GM12878 (cell line): ENCODE measurements at regions of chr9 and their contacts with region 1.

Region 1: GRCh38 chr9:69056191-69056815 is 20.8 kb downstream of the FXN start:
- DNase-seq: no peak
- ATAC-seq: no peak
- H3K4me3 ChIP-seq: no peak overlapping the region
- H3K27ac ChIP-seq: no peak overlapping the region
- H3K4me1 ChIP-seq: no peaks in the 10 kb centered on the region
- H3K27me3 ChIP-seq: no peaks in the 10 kb centered on the region
- CTCF ChIP-seq: no peak
- EP300 ChIP-seq: no peak
- POLR2A ChIP-seq: no peak
- RAD21 ChIP-seq: no peak

Region 2: GRCh38 chr9:69035438-69036308 is 20.6 kb before region 1 on chr9 and contains the start of gene FXN:
- CTCF ChIA-PET with region 1: interaction called, 16 read pairs
- POLR2A ChIA-PET with region 1: interaction called, 3 read pairs
- RAD21 ChIA-PET with region 1: interaction called, 4 read pairs
- SMC1A ChIA-PET with region 1: interaction called, 5 read pairs
- in situ Hi-C with region 1: no loop called
- intact Hi-C with region 1: no loop called
- DNase-seq: peak; percentile 38
- ATAC-seq: peak; percentile 98
- H3K4me3 ChIP-seq: peak within 1 kb of the TSS; percentile 96
- H3K27ac ChIP-seq: peak within 1 kb of the TSS; percentile 72
- H3K4me1 ChIP-seq: peaks cover 6% of the 10 kb centered on the region
- H3K27me3 ChIP-seq: no peaks in the 10 kb centered on the region
- CTCF ChIP-seq: peak; percentile 96 to 98 (median 98)
- EP300 ChIP-seq: no peak
- POLR2A ChIP-seq: peak; percentile 84
- RAD21 ChIP-seq: peak; percentile 67
- polyA plus RNA-seq, gene FXN: 21.0 to 22.3 TPM

Region 3: GRCh38 chr9:69066955-69067354 is 10.7 kb after region 1 on chr9:
- CTCF ChIA-PET with region 1: interaction called, 14 read pairs
- POLR2A ChIA-PET with region 1: no interaction called
- RAD21 ChIA-PET with region 1: no interaction called
- SMC1A ChIA-PET with region 1: interaction called, 3 read pairs
- in situ Hi-C with region 1: no loop called
- intact Hi-C with region 1: no loop called
- DNase-seq: no peak
- ATAC-seq: no peak
- H3K4me3 ChIP-seq: no peak overlapping the region
- H3K27ac ChIP-seq: no peak overlapping the region
- H3K4me1 ChIP-seq: no peaks in the 10 kb centered on the region
- H3K27me3 ChIP-seq: no peaks in the 10 kb centered on the region
- CTCF ChIP-seq: no peak
- EP300 ChIP-seq: no peak
- POLR2A ChIP-seq: no peak
- RAD21 ChIP-seq: no peak

Region 4: DNA sequence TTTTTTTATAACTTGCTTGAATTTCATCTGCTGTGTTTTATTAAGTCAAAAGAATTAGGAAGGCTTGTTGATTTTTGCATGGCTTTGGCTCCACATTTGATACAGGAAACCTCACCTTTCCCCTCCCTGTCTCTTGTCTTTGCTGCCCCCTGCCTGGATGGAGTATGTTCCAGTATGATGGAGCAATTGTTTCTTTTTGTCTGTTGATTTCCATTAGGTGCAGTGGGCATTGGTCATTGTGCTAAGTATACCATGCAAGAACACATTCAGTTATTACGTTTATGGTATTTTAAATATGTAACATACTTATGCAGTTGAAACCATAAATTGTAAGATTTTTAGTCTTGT is 137.4 kb after region 1 on chr9:
- CTCF ChIA-PET with region 1: interaction called, 289 read pairs
- POLR2A ChIA-PET with region 1: interaction called, 5 read pairs
- RAD21 ChIA-PET with region 1: interaction called, 159 read pairs
- SMC1A ChIA-PET with region 1: interaction called, 130 read pairs
- in situ Hi-C with region 1: loop called (anchors 5 kb)
- intact Hi-C with region 1: loop called (anchors 1 kb)
- DNase-seq: no peak
- ATAC-seq: no peak
- H3K4me3 ChIP-seq: no peak overlapping the region
- H3K27ac ChIP-seq: no peak overlapping the region
- H3K4me1 ChIP-seq: peaks cover 15% of the 10 kb centered on the region
- H3K27me3 ChIP-seq: no peaks in the 10 kb centered on the region
- CTCF ChIP-seq: peak in 1 of 3 experiments; percentile 37; a peak in 1 of 6 replicates
- EP300 ChIP-seq: no peak
- POLR2A ChIP-seq: no peak
- RAD21 ChIP-seq: peak; percentile 28; the same call in 1 of the 2 replicates

Region 5: DNA sequence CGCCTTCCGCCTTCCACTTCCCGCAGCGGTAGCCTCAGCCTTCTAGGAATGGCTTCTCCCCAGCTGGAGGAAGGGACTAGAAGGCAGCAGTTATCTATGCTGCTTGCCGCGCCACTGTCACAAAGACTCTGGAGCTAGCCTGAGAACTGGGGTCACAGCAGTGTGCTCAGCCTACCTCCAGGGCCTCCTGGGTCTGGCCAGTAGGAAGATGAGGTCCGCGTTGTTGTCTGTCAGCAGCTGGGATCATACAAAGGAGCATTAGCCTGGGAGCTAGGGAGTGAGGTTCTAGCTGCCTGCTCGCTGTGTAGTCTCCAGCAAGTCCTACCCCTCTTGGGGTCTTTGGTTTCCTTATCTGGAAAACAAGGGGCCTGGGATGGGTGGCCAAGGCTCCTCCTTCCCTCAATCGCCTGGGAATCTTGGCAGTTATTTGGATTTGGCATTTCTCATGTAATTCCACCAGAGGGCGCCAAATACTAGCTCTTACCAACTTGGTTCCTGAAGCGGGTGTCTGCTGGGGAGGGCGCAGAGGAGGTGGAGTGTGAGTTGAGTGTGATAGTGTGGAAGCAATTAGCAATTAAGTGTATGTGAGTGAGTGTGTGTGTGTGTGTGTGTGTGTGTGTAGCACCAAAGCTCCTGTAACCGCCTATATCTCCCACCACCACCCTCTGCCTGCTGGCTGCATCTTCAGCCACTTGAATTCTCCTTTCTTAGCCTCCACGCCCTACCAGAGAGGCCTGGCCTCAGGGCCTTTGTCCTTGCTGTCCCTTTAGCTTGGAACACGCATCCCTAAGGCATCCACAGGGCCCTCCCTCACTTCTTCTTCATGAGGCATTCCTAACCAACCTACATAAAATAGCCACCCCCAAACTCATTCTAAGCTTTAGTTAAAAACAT is 365.9 kb after region 1 on chr9:
- CTCF ChIA-PET with region 1: interaction called, 11 read pairs
- POLR2A ChIA-PET with region 1: no interaction called
- RAD21 ChIA-PET with region 1: interaction called, 3 read pairs
- SMC1A ChIA-PET with region 1: interaction called, 6 read pairs
- in situ Hi-C with region 1: no loop called
- intact Hi-C with region 1: no loop called
- DNase-seq: no peak
- ATAC-seq: peak; percentile 81
- H3K4me3 ChIP-seq: no peak overlapping the region
- H3K27ac ChIP-seq: no peak overlapping the region
- H3K4me1 ChIP-seq: no peaks in the 10 kb centered on the region
- H3K27me3 ChIP-seq: no peaks in the 10 kb centered on the region; a peak in 2 of 4 replicates
- CTCF ChIP-seq: peak; percentile 63 to 83 (median 70); a peak in 5 of 6 replicates
- EP300 ChIP-seq: no peak
- POLR2A ChIP-seq: no peak
- RAD21 ChIP-seq: peak; percentile 95

Region 6: DNA sequence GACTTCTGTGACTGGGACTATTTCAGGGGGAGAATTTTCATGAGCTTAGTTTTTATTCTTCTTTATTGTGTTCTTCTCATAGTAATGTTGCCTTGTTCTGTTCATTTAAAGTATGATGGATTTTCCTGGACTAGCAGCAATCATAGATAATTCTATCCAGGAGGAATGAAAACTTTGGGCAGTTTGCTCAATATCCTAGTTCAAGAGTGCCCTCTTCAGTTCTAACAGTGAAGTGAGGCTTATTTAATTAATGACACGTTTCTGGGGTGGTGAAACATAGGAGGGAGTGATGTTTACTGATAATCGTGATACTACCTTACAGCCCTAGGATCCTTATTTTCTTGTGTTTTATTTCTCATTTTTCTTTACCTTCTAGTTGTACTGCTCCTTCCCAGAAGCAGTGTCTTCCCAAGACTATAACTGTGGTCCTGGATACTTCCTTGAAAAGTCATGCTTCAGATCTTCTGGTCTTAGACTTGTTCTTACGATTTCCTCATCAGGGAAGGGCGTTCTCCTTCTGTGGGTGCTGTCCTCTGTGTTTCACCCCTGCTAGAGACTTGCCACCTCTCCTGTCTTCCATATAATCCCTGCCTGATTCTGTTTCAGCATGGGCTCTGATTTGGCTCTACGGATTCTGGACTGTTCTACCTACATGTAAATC is 821.7 kb after region 1 on chr9:
- CTCF ChIA-PET with region 1: no interaction called
- POLR2A ChIA-PET with region 1: no interaction called
- RAD21 ChIA-PET with region 1: no interaction called
- SMC1A ChIA-PET with region 1: no interaction called
- in situ Hi-C with region 1: loop called (anchors 10 kb)
- intact Hi-C with region 1: no loop called
- DNase-seq: no peak
- ATAC-seq: peak; percentile 57
- H3K4me3 ChIP-seq: no peak overlapping the region
- H3K27ac ChIP-seq: no peak overlapping the region
- H3K4me1 ChIP-seq: no peaks in the 10 kb centered on the region
- H3K27me3 ChIP-seq: no peaks in the 10 kb centered on the region
- CTCF ChIP-seq: peak; percentile 46 to 53 (median 53); a peak in 5 of 6 replicates
- EP300 ChIP-seq: no peak
- POLR2A ChIP-seq: no peak
- RAD21 ChIP-seq: peak; percentile 76